Activated T-helper 2 cell treated with anti-CD3 and anti-CD28 coated beads, Interferon-gamma antibody, Interleukin-2, Interleukin-4, amounts not matched to agents 10 μg/mL and 5 μg/mL and 100 μg/mL, durations not matched to agents 14 hours and 24 hours and 36 hours (primary cell): ENCODE measurements at regions of chr6 and their contacts with region 1.

Region 1: GRCh38 chr6:150004783-150005717 is 20.3 kb downstream of the RAET1L start:
- DNase-seq: peak; percentile 92
- H3K4me3 Mint-ChIP-seq: peak overlapping the region; percentile 84
- H3K27ac Mint-ChIP-seq: peak overlapping the region; percentile 74
- H3K4me1 Mint-ChIP-seq: peaks cover 49% of the 10 kb centered on the region
- H3K27me3 Mint-ChIP-seq: peaks cover 27% of the 10 kb centered on the region

Region 2: GRCh38 chr6:149834513-149835481 is 170.3 kb before region 1 on chr6:
- intact Hi-C with region 1: loop called (anchors 2 kb)
- DNase-seq: peak; percentile 62
- H3K4me3 Mint-ChIP-seq: no peak overlapping the region
- H3K27ac Mint-ChIP-seq: no peak overlapping the region
- H3K4me1 Mint-ChIP-seq: no peaks in the 10 kb centered on the region
- H3K27me3 Mint-ChIP-seq: peaks cover 8% of the 10 kb centered on the region

Region 3: DNA sequence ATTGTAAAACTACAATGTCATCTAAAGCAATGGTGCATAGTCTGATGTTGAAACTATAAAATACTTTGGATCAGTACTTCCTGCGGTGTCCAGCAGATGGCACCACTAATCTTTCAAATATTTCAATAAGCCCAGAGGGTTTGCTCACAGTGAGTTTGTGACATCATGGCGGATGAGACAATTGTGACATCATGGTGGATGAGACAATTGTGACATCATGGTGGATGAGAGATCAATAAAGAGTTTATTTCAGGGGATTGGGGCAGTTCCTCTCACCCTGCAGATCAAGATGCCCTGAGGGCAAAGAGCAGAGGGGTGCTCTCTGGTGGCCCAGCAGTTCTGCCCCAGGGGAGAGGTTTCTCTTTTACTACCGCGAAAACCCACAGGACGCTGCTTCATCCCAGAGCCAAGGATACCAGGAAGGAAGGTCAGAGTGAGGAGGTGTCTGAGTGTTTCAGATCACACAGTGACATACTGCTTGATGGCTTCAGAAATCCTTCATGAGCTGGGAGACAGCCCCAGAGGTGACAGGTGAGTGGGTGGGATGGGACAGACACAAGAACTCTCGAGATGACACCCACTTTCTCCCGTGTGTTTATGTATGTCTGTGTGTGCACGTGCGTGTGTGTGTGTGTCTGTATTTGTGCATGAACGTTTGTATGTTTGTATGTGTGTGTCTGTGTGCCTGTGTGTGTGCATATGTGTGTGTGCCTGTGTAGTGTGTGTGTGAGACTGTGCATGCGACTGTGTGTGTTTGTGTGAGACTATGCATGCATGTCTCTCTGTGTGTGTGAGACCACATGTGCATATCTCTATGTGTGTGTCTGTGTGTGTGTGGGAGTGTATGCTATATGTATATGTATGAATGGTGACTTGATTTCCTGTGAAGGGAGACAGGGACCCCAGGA is 70.5 kb before region 1 on chr6:
- intact Hi-C with region 1: loop called (anchors 5 kb)
- DNase-seq: peak; percentile 60
- H3K4me3 Mint-ChIP-seq: no peak overlapping the region
- H3K27ac Mint-ChIP-seq: no peak overlapping the region
- H3K4me1 Mint-ChIP-seq: peaks cover 21% of the 10 kb centered on the region
- H3K27me3 Mint-ChIP-seq: peaks cover 82% of the 10 kb centered on the region

Region 4: GRCh38 chr6:149990618-149991471 is 14.2 kb before region 1 on chr6:
- intact Hi-C with region 1: loop called (anchors 1 kb)
- DNase-seq: no peak
- H3K4me3 Mint-ChIP-seq: peak overlapping the region; percentile 79
- H3K27ac Mint-ChIP-seq: no peak overlapping the region
- H3K4me1 Mint-ChIP-seq: peaks cover 29% of the 10 kb centered on the region
- H3K27me3 Mint-ChIP-seq: peaks cover 91% of the 10 kb centered on the region

Region 5: DNA sequence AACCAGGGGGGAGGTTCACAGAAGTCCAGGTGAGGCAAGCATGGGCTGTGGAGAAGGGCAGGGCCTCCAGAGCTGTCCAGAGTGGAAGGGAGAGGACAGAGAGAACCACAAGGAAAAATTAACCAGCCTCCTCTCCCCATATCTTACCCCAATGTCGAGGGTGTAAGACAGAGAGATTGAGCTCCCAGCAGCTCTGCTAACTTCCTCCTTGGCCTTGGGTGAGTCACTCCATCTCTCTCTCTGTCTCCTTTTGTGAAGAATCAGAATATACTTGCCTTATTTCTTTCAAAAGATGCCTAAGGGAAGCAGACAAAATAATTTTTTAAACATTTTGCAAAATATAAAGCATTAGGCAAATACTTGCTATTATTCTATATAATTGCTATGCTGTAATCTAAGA is 305.5 kb after region 1 on chr6:
- intact Hi-C with region 1: no loop called
- DNase-seq: no peak
- H3K4me3 Mint-ChIP-seq: no peak overlapping the region
- H3K27ac Mint-ChIP-seq: no peak overlapping the region
- H3K4me1 Mint-ChIP-seq: no peaks in the 10 kb centered on the region
- H3K27me3 Mint-ChIP-seq: peaks cover 14% of the 10 kb centered on the region